A549 (cell line): ENCODE measurements at regions of chr17 and their contacts with region 1.

Region 1: GRCh38 chr17:43393944-43394482 is 4.8 kb upstream of the ARL4D start:
- DNase-seq: peak; percentile 91
- ATAC-seq: peak; percentile 51 to 72
- H3K4me3 ChIP-seq: no peak overlapping the region
- H3K27ac ChIP-seq: peak overlapping the region; percentile 53 to 69
- H3K4me1 ChIP-seq: peaks cover 13% of the 10 kb centered on the region
- CTCF ChIP-seq: peak; percentile 99
- EP300 ChIP-seq: no peak
- POLR2A ChIP-seq: no peak
- RAD21 ChIP-seq: peak; percentile 100

Region 2: DNA sequence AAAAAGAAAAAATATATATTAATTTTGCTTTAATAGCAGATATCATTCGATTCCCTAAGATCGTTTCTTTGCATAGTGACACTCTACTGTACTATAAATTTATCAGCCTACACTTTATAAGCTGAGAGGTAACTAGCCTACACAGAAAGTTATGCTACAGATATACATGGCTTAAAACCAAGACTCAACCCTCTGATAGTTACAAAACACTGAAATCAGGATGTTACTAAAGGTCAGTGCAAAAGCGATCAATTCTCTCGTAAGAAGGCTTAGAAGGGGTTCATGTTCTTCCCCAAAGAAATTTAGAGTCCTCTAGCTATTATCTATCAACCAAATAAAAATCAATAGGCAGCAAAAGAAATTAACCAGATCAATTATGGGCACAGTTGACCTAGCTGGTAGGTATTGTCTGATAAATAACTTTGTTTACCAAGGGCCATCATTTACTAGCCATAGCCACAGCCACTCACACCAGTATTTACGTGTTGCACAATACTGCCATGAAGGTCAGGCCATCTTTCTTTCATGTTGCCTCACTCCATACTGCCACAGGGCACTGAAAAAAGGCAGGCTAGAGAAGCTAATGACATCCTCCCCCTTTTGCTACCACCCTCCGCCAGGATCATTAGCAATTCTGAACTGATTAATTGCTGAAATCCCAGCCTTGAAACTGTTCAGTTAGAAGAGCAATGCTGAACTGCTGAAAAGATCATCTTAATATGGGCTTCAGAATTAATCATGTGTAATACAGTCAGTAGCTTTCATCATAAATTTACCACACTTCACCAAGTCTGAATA is 325.2 kb before region 1 on chr17:
- CTCF ChIA-PET with region 1: no interaction called
- POLR2A ChIA-PET with region 1: no interaction called
- DNase-seq: peak in 1 of 2 experiments; percentile 22
- ATAC-seq: peak; percentile 50 to 52; a peak in 3 of 6 replicates
- H3K4me3 ChIP-seq: no peak overlapping the region
- H3K27ac ChIP-seq: peak overlapping the region in 1 of 2 experiments; percentile 34; a peak in 3 of 6 replicates
- H3K4me1 ChIP-seq: peaks cover 9% of the 10 kb centered on the region; the same call in 1 of the 3 replicates
- CTCF ChIP-seq: no peak
- EP300 ChIP-seq: no peak
- POLR2A ChIP-seq: no peak
- RAD21 ChIP-seq: no peak

Region 3: DNA sequence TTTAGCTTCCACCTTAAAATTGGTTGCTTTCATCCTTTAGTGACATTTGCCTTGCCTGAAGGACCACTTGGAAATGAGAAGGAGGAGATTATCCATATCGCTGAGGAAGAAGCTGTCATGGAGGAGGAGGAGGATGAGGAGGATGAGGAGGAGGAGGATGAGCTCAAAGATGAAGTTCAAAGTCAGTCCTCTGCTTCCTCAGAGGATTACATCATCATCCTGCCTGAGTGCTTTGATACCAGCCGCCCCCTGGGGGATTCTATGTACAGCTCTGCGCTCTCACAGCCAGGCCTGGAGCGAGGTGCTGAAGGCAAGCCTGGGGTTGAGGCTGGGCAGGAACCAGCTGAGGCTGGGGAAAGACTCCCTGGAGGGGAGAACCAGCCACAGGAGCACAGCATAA is 193.9 kb before region 1 on chr17:
- CTCF ChIA-PET with region 1: no interaction called
- POLR2A ChIA-PET with region 1: no interaction called
- DNase-seq: no peak
- ATAC-seq: peak in 1 of 2 experiments; percentile 59; a peak in 3 of 6 replicates
- H3K4me3 ChIP-seq: no peak overlapping the region
- H3K27ac ChIP-seq: no peak overlapping the region
- H3K4me1 ChIP-seq: no peaks in the 10 kb centered on the region
- CTCF ChIP-seq: no peak
- EP300 ChIP-seq: no peak
- POLR2A ChIP-seq: no peak
- RAD21 ChIP-seq: no peak

Region 4: DNA sequence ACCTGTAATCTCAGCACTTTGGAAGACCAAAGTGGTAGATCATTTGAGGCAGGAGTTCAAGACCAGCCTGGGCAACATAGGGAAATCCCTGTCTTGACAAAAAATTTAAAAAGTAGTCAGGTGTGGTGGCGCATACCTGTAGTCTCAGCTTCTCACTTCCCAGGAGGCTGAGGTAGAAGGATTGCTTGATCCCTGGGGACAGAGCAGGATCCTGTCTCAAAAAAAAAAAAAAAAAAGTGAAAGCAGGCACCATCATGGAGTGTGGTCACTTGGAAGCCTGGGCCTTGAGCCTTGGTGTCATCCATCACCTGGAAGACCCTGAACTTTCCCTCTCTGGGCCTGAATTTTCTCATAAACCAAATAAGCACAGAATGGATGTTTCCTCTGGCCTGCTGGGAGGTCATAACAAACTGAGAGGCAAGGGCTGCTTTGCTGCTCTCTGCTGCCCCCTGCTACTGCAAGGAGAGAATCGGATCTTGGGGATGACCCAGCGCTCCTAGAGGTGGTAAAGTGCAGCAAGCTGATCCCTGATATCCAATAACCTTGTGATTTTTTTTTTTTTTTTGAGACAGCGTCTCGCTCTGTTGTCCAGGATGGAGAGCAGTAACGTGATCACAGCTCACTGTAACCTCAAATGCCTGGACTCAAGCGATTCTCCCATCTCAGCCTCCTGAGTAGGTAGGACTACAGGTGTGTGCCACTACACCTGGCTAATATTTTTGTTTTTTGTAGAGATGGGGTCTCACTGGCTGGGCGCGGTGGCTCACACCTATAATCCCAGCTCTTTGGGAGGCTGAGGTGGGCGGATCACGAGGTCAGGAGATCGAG is 84.3 kb before region 1 on chr17:
- CTCF ChIA-PET with region 1: no interaction called
- POLR2A ChIA-PET with region 1: no interaction called
- DNase-seq: peak in 1 of 2 experiments; percentile 58
- ATAC-seq: no peak
- H3K4me3 ChIP-seq: no peak overlapping the region
- H3K27ac ChIP-seq: no peak overlapping the region; a peak in 1 of 6 replicates
- H3K4me1 ChIP-seq: no peaks in the 10 kb centered on the region; the same call in 1 of the 3 replicates
- CTCF ChIP-seq: no peak
- EP300 ChIP-seq: no peak
- POLR2A ChIP-seq: no peak
- RAD21 ChIP-seq: no peak

Region 5: GRCh38 chr17:43360739-43361505 is 33.1 kb before region 1 on chr17:
- CTCF ChIA-PET with region 1: interaction called, 5 read pairs
- POLR2A ChIA-PET with region 1: interaction called, 16 read pairs
- DNase-seq: peak; percentile 98 to 100
- ATAC-seq: peak; percentile 87 to 92
- H3K4me3 ChIP-seq: peak overlapping the region; percentile 62
- H3K27ac ChIP-seq: peak overlapping the region; percentile 88 to 91
- H3K4me1 ChIP-seq: peaks cover 28% of the 10 kb centered on the region
- CTCF ChIP-seq: no peak
- EP300 ChIP-seq: peak in 1 of 2 experiments; percentile 46; a peak in 2 of 5 replicates
- POLR2A ChIP-seq: peak; percentile 100
- RAD21 ChIP-seq: peak in 1 of 2 experiments; percentile 32; a peak in 1 of 5 replicates

Region 6: DNA sequence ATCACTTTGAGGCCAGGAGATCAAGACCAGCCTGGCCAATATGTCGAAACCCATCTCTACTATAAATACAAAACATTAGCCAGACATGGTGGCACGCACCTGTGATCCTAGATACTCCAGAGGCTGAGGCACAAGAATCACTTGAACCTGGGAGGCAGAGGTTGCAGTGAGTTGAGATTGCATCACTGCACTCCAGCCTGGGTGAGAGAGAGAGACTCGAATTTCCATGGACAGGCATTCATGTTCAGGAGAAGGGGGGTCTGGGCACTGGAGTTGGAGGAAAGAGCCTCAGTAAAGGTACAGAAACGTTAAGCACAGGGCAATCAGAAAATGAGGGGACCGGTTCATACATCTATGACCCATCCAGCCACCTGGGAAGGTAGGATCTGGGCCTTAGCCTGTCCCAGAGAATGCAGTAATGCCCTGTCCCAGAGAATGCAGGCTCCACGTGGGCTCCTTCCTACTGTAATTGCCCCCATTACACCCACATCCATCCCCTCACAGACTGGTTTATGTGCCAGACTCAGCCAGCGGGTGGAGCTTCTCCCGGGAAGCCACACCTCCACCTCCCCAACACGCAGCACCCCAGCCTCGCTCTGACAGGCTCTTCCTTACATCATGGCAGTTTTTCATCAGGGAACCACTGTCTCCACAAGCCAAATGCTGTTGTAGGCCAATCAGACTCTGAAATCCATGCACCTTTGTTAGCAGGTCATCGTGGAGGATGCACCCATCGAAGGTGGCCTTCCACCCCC is 16.8 kb before region 1 on chr17:
- CTCF ChIA-PET with region 1: interaction called, 28 read pairs
- POLR2A ChIA-PET with region 1: no interaction called
- DNase-seq: no peak
- ATAC-seq: peak; percentile 27 to 40; a peak in 4 of 6 replicates
- H3K4me3 ChIP-seq: no peak overlapping the region
- H3K27ac ChIP-seq: no peak overlapping the region
- H3K4me1 ChIP-seq: no peaks in the 10 kb centered on the region
- CTCF ChIP-seq: no peak
- EP300 ChIP-seq: no peak
- POLR2A ChIP-seq: no peak
- RAD21 ChIP-seq: no peak

Region 7: DNA sequence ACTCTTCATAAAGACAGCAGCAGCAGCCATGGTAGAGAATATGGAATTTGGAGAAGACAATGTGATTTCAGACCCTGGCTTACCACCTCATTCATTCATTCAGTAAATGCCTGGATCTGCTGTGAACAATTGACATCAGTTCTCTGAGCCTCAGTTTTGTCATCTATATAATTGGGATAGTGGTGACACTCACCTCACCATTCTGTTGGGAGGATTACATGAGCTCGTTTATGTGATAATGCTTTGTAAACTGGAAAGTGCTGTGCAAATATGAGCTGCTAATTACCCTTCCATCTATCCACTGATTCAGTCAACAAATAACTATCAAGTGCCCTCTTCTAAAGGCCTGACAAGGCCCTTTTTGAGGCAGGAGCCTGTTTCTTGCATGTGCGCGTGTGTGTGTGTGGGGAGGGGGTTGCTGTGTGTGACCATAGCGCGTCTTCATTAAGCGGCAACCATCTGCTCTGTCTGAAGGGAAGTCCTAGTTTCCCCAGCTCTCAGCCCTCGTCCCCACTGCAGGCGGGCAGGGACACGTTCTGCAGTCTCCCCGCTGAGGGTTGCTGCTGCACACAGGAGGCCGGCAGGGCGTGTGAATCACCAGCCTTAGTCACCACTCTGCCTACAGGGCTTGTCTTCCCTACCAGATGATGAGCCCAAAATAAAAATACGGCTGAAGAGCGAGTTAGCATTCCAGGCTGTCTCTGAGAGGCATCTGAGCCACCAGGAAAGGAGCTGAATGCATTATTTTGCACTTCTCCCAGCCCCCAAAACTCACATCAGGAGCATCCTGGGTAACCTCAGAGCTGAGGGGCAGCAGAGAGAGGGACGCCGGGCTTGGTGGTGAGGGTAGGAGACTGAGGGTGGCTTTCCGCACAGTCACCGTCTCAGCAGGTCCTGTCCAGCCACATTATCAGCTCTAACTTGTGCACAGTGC is 24.7 kb after region 1 on chr17:
- CTCF ChIA-PET with region 1: interaction called, 386 read pairs
- POLR2A ChIA-PET with region 1: interaction called, 38 read pairs
- DNase-seq: peak; percentile 88 to 97
- ATAC-seq: peak; percentile 98 to 99
- H3K4me3 ChIP-seq: no peak overlapping the region
- H3K27ac ChIP-seq: peak overlapping the region; percentile 81 to 85
- H3K4me1 ChIP-seq: peaks cover 36% of the 10 kb centered on the region
- CTCF ChIP-seq: 0 out of 3 replicates have a peak, but pooled peaks have one; percentile 8
- EP300 ChIP-seq: no peak
- POLR2A ChIP-seq: peak; percentile 37
- RAD21 ChIP-seq: peak; percentile 47 to 51; a peak in 4 of 5 replicates

Region 8: GRCh38 chr17:43442711-43443110 is 48.7 kb after region 1 on chr17:
- CTCF ChIA-PET with region 1: interaction called, 43 read pairs
- POLR2A ChIA-PET with region 1: interaction called, 11 read pairs
- DNase-seq: peak in 1 of 2 experiments; percentile 61
- ATAC-seq: peak; percentile 74 to 77; a peak in 5 of 6 replicates
- H3K4me3 ChIP-seq: no peak overlapping the region
- H3K27ac ChIP-seq: peak overlapping the region; percentile 56 to 59; a peak in 5 of 6 replicates
- H3K4me1 ChIP-seq: peaks cover 36% of the 10 kb centered on the region
- CTCF ChIP-seq: no peak
- EP300 ChIP-seq: no peak
- POLR2A ChIP-seq: no peak
- RAD21 ChIP-seq: no peak

Region 9: DNA sequence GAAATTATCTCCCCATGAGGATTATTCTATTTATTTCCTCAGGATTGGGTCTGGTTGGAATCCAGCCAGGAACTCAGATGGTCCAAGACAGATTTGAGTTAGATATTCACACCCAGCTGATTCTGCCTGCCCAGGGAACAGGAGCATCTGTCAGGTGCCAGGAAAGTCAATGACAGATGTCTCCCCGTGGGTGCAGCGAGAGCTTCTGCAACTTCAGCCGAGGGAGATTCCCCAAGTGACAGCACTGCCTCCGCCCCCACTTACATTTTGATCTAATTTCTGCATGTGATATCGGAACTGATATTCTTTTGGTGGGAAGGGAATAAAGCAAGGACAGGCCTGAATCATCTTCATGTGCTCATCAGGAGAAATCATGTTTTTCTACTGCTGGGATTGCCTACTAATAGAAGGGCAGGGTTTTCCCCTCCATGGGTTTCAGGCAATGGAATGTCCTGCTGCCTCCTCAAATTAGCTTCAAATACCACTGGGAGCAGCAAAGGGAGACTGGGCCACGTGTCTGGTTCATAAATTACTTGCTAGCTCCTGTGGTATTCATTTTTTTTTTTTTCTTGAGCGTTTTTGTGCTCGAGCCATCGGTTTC is 74.1 kb after region 1 on chr17:
- CTCF ChIA-PET with region 1: interaction called, 2,036 read pairs
- POLR2A ChIA-PET with region 1: interaction called, 10 read pairs
- DNase-seq: no peak
- ATAC-seq: no peak
- H3K4me3 ChIP-seq: no peak overlapping the region
- H3K27ac ChIP-seq: peak overlapping the region; percentile 44 to 65; a peak in 4 of 6 replicates
- H3K4me1 ChIP-seq: peaks cover 31% of the 10 kb centered on the region
- CTCF ChIP-seq: no peak
- EP300 ChIP-seq: no peak
- POLR2A ChIP-seq: no peak
- RAD21 ChIP-seq: no peak